ENCODE measurements at regions of chr9 and their contacts with region 1.

Region 1: GRCh38 chr9:37485389-37486219 is at the start of gene POLR1E:
- DNase-seq: peak; percentile 97
- H3K4me3 Mint-ChIP-seq: peak within 1 kb of the TSS; percentile 90
- H3K27ac Mint-ChIP-seq: peak within 1 kb of the TSS; percentile 94
- H3K4me1 Mint-ChIP-seq: peaks cover 27% of the 10 kb centered on the region
- H3K27me3 Mint-ChIP-seq: no peaks in the 10 kb centered on the region
- CTCF ChIP-seq: no peak
- total RNA-seq, gene POLR1E: 29.7 and 50.3 TPM in 2 replicates

Region 2: GRCh38 chr9:37465249-37466036 is 20.2 kb before region 1 on chr9 and contains the start of gene ZBTB5:
- CTCF ChIA-PET with region 1: interaction called, 4 read pairs
- POLR2A ChIA-PET with region 1: interaction called, 75 read pairs
- intact Hi-C with region 1: no loop called
- DNase-seq: peak; percentile 99
- H3K4me3 Mint-ChIP-seq: peak within 1 kb of the TSS; percentile 92
- H3K27ac Mint-ChIP-seq: peak within 1 kb of the TSS; percentile 95
- H3K4me1 Mint-ChIP-seq: peaks cover 22% of the 10 kb centered on the region
- H3K27me3 Mint-ChIP-seq: no peaks in the 10 kb centered on the region
- CTCF ChIP-seq: no peak
- total RNA-seq, gene ZBTB5: 8.9 and 9.0 TPM in 2 replicates

Region 3: DNA sequence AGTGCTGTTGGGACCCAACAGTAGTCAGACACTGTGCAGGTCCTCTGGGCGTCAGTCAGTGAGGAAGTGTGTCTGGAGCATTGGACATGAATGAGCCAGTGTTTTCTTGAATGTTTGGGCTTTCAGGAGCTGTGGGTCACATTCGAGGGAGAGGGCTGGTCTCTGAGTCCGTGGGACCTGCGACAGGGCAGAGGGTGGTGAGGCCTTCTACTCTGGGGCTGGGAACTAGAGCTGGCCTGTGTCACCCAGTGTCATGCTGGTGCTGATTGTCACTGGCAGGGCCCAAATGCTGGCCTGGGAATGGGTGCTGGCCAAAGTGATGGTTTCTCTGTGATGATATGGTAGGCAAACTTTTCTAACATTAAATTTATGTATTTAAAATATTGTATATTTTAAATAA is 10.4 kb after region 1 on chr9:
- CTCF ChIA-PET with region 1: interaction called, 3 read pairs
- POLR2A ChIA-PET with region 1: interaction called, 15 read pairs
- intact Hi-C with region 1: no loop called
- DNase-seq: no peak
- H3K4me3 Mint-ChIP-seq: no peak overlapping the region
- H3K27ac Mint-ChIP-seq: no peak overlapping the region
- H3K4me1 Mint-ChIP-seq: no peaks in the 10 kb centered on the region
- H3K27me3 Mint-ChIP-seq: no peaks in the 10 kb centered on the region
- CTCF ChIP-seq: no peak

Region 4: DNA sequence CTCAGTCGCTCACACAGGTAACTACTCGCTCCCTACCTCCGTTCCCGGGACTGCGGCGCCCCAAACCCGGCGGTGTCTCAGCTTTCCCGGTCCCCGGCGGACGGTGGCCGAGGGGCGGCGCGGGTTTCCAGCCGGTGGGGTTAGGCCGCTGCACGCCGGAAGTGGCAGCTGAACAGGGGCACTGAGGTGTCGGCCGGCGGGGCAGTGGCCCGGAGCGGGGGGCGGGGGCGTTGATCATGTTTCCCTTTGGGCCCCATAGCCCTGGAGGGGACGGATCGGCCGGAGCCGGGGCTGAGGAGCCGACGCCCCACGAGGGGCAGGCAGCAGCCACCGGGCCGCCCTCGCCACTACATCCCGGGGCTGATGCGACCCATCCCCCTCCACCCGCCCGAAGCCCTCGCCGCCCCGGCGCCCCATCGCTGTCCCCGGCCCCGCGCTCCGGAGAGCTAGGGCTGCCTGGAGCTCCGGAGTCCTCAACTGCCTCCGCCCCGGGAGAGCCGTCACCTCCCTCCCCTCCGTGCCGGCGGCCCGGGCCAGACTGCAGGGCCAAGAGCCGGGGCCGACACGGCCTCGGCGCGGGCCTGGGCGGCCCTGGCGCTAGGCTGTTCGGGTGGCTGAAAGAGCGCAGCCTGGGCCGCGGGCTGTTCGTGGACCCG is 315.2 kb after region 1 on chr9 and contains the start of gene DCAF10:
- CTCF ChIA-PET with region 1: no interaction called
- POLR2A ChIA-PET with region 1: interaction called, 15 read pairs
- intact Hi-C with region 1: loop called (anchors 10 kb)
- DNase-seq: peak; percentile 82
- H3K4me3 Mint-ChIP-seq: peak within 1 kb of the TSS; percentile 88
- H3K27ac Mint-ChIP-seq: peak within 1 kb of the TSS; percentile 50
- H3K4me1 Mint-ChIP-seq: peaks cover 21% of the 10 kb centered on the region
- H3K27me3 Mint-ChIP-seq: no peaks in the 10 kb centered on the region
- CTCF ChIP-seq: no peak
- total RNA-seq, gene DCAF10: 42.1 and 49.4 TPM in 2 replicates

Region 5: GRCh38 chr9:38263532-38263931 is 777.9 kb after region 1 on chr9:
- CTCF ChIA-PET with region 1: interaction called, 4 read pairs
- POLR2A ChIA-PET with region 1: no interaction called
- intact Hi-C with region 1: loop called (anchors 10 kb)
- DNase-seq: peak; percentile 43
- H3K4me3 Mint-ChIP-seq: no peak overlapping the region
- H3K27ac Mint-ChIP-seq: no peak overlapping the region
- H3K4me1 Mint-ChIP-seq: no peaks in the 10 kb centered on the region
- H3K27me3 Mint-ChIP-seq: peaks cover 67% of the 10 kb centered on the region
- CTCF ChIP-seq: peak; percentile 48

Measured in MCF 10A (cell line).